Activated CD4-positive, alpha-beta memory T cell treated with anti-CD3 and anti-CD28 coated beads for 36 hours (primary cell): ENCODE measurements at regions of chr10 and their contacts with region 1.

Region 1: GRCh38 chr10:61992671-61993668 is 91.5 kb downstream of the ARID5B start:
- DNase-seq: peak; percentile 75
- H3K4me3 Mint-ChIP-seq: peak overlapping the region; percentile 57
- H3K27ac Mint-ChIP-seq: peak overlapping the region; percentile 99
- H3K4me1 Mint-ChIP-seq: peaks cover 85% of the 10 kb centered on the region
- H3K27me3 Mint-ChIP-seq: no peaks in the 10 kb centered on the region

Region 2: GRCh38 chr10:61662794-61663259 is 330.1 kb before region 1 on chr10 and contains the start of gene CABCOCO1:
- CTCF ChIA-PET with region 1: no interaction called
- POLR2A ChIA-PET with region 1: no interaction called
- intact Hi-C with region 1: no loop called
- DNase-seq: no peak
- H3K4me3 Mint-ChIP-seq: no peak within 1 kb of the TSS
- H3K27ac Mint-ChIP-seq: no peak within 1 kb of the TSS
- H3K4me1 Mint-ChIP-seq: no peaks in the 10 kb centered on the region
- H3K27me3 Mint-ChIP-seq: peaks cover 24% of the 10 kb centered on the region
- total RNA-seq, gene CABCOCO1: not detected

Region 3: GRCh38 chr10:61774031-61774430 is 218.9 kb before region 1 on chr10:
- CTCF ChIA-PET with region 1: no interaction called
- POLR2A ChIA-PET with region 1: no interaction called
- intact Hi-C with region 1: no loop called
- DNase-seq: no peak
- H3K4me3 Mint-ChIP-seq: no peak overlapping the region
- H3K27ac Mint-ChIP-seq: no peak overlapping the region
- H3K4me1 Mint-ChIP-seq: no peaks in the 10 kb centered on the region
- H3K27me3 Mint-ChIP-seq: peaks cover 2% of the 10 kb centered on the region

Region 4: DNA sequence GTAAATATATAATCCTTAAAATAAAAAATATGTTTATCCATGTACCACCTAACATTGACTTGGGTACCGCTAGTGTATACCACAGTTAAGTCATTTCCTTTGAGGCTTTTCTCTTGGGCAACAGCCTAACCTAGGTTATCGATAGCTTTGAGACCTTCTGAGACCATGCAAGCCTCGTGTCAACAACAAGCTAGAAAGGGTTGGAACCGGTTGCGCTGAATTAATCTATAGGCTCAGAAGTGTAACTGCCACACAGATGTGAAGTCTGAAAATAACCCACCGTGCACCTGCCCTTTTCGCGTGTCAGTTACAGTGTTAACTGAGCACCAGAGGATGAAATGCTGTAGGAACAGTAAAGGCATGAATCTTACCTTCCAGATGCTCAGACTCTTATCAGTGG is 31.7 kb before region 1 on chr10:
- CTCF ChIA-PET with region 1: interaction called, 3 read pairs
- POLR2A ChIA-PET with region 1: interaction called, 22 read pairs
- intact Hi-C with region 1: loop called (anchors 1 kb)
- DNase-seq: peak; percentile 49
- H3K4me3 Mint-ChIP-seq: peak overlapping the region; percentile 24
- H3K27ac Mint-ChIP-seq: peak overlapping the region; percentile 76
- H3K4me1 Mint-ChIP-seq: peaks cover 87% of the 10 kb centered on the region
- H3K27me3 Mint-ChIP-seq: no peaks in the 10 kb centered on the region

Region 5: DNA sequence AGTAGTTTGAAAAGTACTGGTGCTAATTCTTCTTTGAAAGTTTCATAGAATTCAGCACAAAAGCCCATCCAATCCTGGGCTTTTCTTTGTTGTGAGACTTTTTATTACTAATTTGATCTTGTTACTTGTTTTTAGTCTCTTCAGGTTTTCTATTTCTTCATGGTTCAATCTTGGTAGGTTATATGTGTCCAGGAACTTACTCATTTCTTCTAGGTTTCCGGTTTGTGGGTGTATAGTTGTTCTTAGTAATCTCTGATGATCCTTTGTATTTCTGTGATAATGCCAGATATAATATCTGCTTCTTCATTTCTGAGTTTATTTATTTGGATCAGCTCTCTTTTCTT is 128.2 kb after region 1 on chr10:
- CTCF ChIA-PET with region 1: no interaction called
- POLR2A ChIA-PET with region 1: no interaction called
- intact Hi-C with region 1: no loop called
- DNase-seq: no peak
- H3K4me3 Mint-ChIP-seq: no peak overlapping the region
- H3K27ac Mint-ChIP-seq: peak overlapping the region; percentile 59
- H3K4me1 Mint-ChIP-seq: peaks cover 31% of the 10 kb centered on the region
- H3K27me3 Mint-ChIP-seq: no peaks in the 10 kb centered on the region